GM12878 (cell line): ENCODE measurements at regions of chr18 and their contacts with region 1.

Region 1: GRCh38 chr18:50170004-50170403 is 24.9 kb downstream of the MYO5B start:
- DNase-seq: no peak
- ATAC-seq: no peak
- H3K4me3 ChIP-seq: no peak overlapping the region
- H3K27ac ChIP-seq: no peak overlapping the region
- H3K4me1 ChIP-seq: no peaks in the 10 kb centered on the region
- H3K27me3 ChIP-seq: no peaks in the 10 kb centered on the region; a peak in 2 of 4 replicates
- CTCF ChIP-seq: no peak
- EP300 ChIP-seq: no peak
- POLR2A ChIP-seq: no peak
- RAD21 ChIP-seq: no peak

Region 2: DNA sequence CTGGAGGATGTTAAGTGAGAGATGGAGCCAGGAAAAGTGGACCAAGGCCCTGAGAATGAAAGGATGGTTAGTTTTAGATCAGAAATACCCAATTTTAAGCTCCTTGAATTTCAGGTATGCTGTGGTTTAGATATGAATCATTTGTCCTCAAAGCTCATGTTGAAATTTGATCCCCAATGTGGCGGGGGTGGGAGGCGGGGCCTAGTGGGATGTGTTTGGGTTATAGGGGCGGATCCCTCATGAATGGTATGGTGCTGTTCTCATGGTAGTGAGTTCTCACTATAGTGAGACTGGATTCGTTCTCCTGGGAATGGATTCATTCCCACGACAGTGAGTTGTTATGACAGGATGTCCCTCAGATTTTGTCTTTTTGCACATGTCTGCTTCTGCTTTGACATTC is 13.6 kb after region 1 on chr18:
- CTCF ChIA-PET with region 1: interaction called, 12 read pairs
- POLR2A ChIA-PET with region 1: interaction called, 4 read pairs
- RAD21 ChIA-PET with region 1: interaction called, 13 read pairs
- SMC1A ChIA-PET with region 1: interaction called, 49 read pairs
- in situ Hi-C with region 1: no loop called
- intact Hi-C with region 1: no loop called
- DNase-seq: no peak
- ATAC-seq: peak; percentile 50; the same call in 2 of the 3 replicates
- H3K4me3 ChIP-seq: no peak overlapping the region
- H3K27ac ChIP-seq: no peak overlapping the region
- H3K4me1 ChIP-seq: no peaks in the 10 kb centered on the region
- H3K27me3 ChIP-seq: 0 out of 4 replicates have a peak, but pooled peaks cover 0 to 2% of the 10 kb centered on the region in 2 experiments
- CTCF ChIP-seq: no peak
- EP300 ChIP-seq: no peak
- POLR2A ChIP-seq: no peak
- RAD21 ChIP-seq: no peak